Activated naive CD4-positive, alpha-beta T cell treated with anti-CD3 and anti-CD28 coated beads for 36 hours (primary cell): ENCODE measurements at regions of chr19 and their contacts with region 1.

Region 1: GRCh38 chr19:40603389-40604135 is 2.4 kb downstream of the LTBP4 start:
- DNase-seq: peak; percentile 98
- H3K4me3 Mint-ChIP-seq: peak overlapping the region; percentile 79
- H3K27ac Mint-ChIP-seq: no peak overlapping the region
- H3K4me1 Mint-ChIP-seq: peaks cover 67% of the 10 kb centered on the region
- H3K27me3 Mint-ChIP-seq: peaks cover 28% of the 10 kb centered on the region

Region 2: GRCh38 chr19:40614622-40615411 is 11.3 kb after region 1 on chr19:
- CTCF ChIA-PET with region 1: interaction called, 5 read pairs
- intact Hi-C with region 1: loop called (anchors 1 kb)
- DNase-seq: peak; percentile 98
- H3K4me3 Mint-ChIP-seq: peak overlapping the region; percentile 88
- H3K27ac Mint-ChIP-seq: peak overlapping the region; percentile 97
- H3K4me1 Mint-ChIP-seq: peaks cover 67% of the 10 kb centered on the region
- H3K27me3 Mint-ChIP-seq: no peaks in the 10 kb centered on the region